Ovary (tissue), 10 donors: ENCODE measurements at regions of chr22 and their contacts with region 1.

Region 1: DNA sequence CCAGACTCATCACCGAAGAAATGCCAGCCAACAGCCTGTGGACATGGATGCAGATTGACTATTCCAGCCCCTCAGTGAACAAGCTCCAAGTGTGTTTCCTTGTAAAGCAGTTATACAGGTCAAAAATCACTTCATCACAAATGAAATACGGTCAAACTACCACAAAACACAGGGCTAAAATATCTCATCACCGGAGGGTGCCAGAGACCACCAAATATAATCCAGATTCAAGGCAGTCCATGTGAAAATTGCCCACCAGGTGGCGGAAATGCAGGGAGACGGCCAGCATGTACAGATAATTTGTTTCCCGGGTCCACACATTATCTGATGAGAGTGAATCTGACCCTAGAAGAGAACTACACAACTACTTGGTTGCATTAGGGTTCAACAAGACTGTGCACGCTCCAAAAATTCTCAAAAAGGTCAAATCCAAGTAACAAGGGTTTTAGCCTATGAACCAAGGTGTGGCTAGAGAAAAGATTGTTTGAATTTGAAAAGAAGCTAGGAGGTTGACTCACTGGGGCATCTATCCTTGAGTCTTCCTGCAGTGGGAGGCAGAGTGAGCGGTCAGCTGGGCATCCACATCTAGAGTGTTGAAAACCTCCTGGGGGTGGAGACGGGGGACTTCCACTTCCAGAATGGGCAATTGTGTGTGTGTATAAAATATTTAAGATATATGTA is 71.7 kb downstream of the IGLL5 start:
- DNase-seq: peak; percentile 73 to 85 (median 82)
- H3K4me3 ChIP-seq: no peak overlapping the region
- H3K27ac ChIP-seq: no peak overlapping the region
- H3K4me1 ChIP-seq: no peaks in the 10 kb centered on the region
- H3K27me3 ChIP-seq: no peaks in the 10 kb centered on the region
- CTCF ChIP-seq: peak; percentile 90 to 98 (median 96)
- EP300 ChIP-seq: no peak
- POLR2A ChIP-seq: no peak

Region 2: DNA sequence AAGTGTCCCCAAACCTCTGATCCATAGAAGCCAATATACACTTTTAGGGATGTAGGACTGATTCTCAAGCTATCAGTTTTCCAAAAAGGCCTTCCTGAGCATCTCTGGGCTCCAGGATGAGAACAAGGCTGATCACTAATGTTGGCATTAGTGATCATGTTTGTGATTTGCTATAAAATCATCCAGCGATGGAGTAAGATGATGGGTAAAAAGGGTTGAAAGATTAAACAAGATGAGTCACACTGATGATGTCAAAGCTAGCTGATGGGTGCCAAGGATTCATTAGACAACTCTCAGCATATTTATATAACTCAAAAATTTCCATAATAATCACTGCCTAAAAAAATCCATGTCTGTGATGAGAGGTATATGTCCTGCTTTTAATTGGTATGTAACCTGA is 493.5 kb before region 1 on chr22:
- intact Hi-C with region 1: loop called in 2 of 4 experiments (anchors 5 kb)
- DNase-seq: no peak
- H3K4me3 ChIP-seq: no peak overlapping the region
- H3K27ac ChIP-seq: no peak overlapping the region
- H3K4me1 ChIP-seq: no peaks in the 10 kb centered on the region
- H3K27me3 ChIP-seq: no peaks in the 10 kb centered on the region
- CTCF ChIP-seq: no peak
- EP300 ChIP-seq: no peak
- POLR2A ChIP-seq: no peak

Region 3: DNA sequence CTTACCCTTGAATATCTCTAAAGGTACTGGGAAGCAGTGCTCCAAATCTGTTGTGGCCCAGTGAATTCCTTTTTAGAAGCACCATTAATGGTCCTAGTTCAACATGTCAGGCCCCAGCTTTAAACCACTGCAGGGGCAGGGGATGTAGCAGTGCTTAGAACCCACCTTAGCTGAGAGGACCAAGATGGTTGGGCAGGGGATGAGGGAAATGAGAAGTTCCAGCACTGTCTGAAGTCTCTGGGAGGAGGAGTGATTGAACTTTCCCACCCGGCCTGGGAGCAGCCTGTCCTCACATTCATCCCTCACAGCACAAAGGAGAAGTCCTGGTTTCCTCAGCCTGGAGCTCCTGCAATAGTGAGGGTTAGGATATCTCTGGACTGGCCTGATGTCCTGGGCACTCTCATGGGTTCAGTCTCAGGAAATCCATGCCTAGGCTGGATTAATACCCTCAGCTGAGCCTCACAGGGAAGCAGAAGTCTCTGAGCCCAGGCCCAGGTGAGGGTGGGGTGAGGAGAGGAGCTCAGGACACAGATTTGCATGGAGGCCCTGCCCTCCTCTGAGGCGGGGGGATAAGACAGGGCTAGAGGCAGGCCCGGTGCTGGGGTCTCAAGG is 371.6 kb before region 1 on chr22:
- intact Hi-C with region 1: loop called in 1 of 4 experiments (anchors 10 kb)
- DNase-seq: no peak
- H3K4me3 ChIP-seq: no peak overlapping the region
- H3K27ac ChIP-seq: no peak overlapping the region
- H3K4me1 ChIP-seq: no peaks in the 10 kb centered on the region
- H3K27me3 ChIP-seq: no peaks in the 10 kb centered on the region
- CTCF ChIP-seq: no peak
- EP300 ChIP-seq: no peak
- POLR2A ChIP-seq: no peak

Region 4: DNA sequence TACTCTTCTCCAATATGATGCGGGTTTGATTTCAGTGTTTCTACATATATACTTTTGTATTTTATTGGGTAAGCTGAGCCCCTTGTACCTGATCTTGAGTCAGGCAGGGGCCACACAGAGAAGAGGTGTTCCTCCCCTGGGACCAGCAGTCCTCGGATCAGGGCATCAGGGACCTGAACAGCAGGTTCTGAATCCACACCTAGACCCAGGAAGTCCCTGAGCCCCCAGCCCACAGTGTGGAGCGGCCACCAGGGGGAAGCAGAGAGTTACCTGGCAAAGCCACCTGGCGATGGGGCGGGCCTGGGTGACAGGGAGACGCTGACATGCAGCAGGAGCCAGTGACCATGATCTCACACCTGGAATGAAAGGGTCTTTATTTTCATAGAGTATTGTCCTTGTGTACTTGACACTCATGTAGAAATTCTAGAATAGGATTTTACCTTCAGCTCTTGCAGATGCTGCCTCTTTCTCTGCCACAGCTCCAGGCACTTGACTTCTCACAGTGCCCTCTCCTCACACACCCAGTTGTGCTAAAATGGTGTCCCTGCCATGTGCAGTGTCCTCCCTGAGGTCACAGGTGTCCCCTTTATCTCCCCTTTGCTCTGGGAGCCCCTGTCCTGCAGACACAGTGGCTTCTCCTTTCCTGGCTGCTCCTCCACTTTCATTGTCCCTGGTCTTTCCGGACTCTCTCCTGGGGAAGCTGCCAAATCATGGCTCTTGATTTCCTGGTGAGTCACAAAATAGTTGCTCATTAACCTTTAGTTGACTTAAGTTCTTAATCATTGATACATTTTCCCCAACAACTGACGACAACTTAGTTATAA is 266.4 kb before region 1 on chr22:
- intact Hi-C with region 1: loop called in 1 of 4 experiments (anchors 10 kb)
- DNase-seq: peak; percentile 29 to 65 (median 52)
- H3K4me3 ChIP-seq: no peak overlapping the region
- H3K27ac ChIP-seq: no peak overlapping the region
- H3K4me1 ChIP-seq: no peaks in the 10 kb centered on the region
- H3K27me3 ChIP-seq: no peaks in the 10 kb centered on the region
- CTCF ChIP-seq: peak in 1 of 3 donors; percentile 26
- EP300 ChIP-seq: no peak
- POLR2A ChIP-seq: no peak

Region 5: GRCh38 chr22:23012081-23012622 is 52.9 kb after region 1 on chr22:
- intact Hi-C with region 1: no loop called
- DNase-seq: no peak
- H3K4me3 ChIP-seq: no peak overlapping the region
- H3K27ac ChIP-seq: no peak overlapping the region
- H3K4me1 ChIP-seq: no peaks in the 10 kb centered on the region
- H3K27me3 ChIP-seq: no peaks in the 10 kb centered on the region
- CTCF ChIP-seq: no peak
- EP300 ChIP-seq: no peak
- POLR2A ChIP-seq: no peak

Region 6: DNA sequence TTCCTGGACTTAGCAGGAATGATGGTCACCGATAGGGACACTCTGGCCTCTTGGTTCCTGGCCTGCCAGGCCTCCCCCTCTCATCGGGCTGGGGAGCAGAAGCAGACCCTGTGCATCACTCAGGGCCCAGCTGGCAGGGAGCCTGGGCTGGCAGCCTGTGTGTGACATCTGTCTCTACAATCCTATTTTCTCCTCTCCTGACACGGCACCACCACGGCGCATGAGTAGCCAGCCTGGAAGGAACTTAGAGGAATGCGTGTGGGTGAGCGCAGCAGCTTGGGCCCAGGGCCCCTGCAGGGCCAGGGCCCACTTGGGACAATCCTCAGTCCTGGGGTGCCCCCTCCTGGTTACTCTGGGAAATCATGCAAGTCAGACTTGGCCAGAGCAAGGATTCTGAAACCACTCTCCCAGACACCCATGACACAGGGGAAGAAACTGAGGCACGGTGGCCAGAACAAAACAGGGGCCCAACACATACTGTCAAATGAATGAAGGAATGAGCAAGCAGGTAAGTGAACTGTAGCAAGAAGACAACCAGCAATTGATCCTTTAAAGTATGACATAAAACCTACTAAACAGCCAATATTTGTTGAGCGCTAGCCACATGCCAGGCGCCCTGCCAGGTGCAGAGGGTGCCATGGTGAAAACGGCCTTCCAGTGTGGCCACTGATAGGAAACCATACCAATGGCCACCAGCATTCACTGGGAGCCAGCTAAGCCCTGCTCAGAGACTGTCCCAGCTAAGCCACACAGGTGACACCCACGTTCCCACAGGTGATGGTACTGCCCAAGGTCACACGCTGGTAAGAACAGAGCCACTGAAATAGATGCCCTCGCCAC is 169.2 kb after region 1 on chr22:
- intact Hi-C with region 1: loop called (anchors 1 to 5 kb)
- DNase-seq: peak; percentile 74 to 91 (median 87)
- H3K4me3 ChIP-seq: no peak overlapping the region
- H3K27ac ChIP-seq: no peak overlapping the region
- H3K4me1 ChIP-seq: peaks cover 8% of the 10 kb centered on the region
- H3K27me3 ChIP-seq: no peaks in the 10 kb centered on the region
- CTCF ChIP-seq: peak; percentile 53 to 89 (median 87)
- EP300 ChIP-seq: no peak
- POLR2A ChIP-seq: no peak

Region 7: GRCh38 chr22:23144932-23145873 is 185.9 kb after region 1 on chr22 and contains the start of gene RAB36:
- intact Hi-C with region 1: no loop called
- DNase-seq: peak; percentile 99 to 100 (median 100)
- H3K4me3 ChIP-seq: peak within 1 kb of the TSS; percentile 47
- H3K27ac ChIP-seq: peak within 1 kb of the TSS in 1 of 2 donors; percentile 77
- H3K4me1 ChIP-seq: peaks cover 4% of the 10 kb centered on the region
- H3K27me3 ChIP-seq: no peaks in the 10 kb centered on the region
- CTCF ChIP-seq: no peak
- EP300 ChIP-seq: no peak
- POLR2A ChIP-seq: no peak
- total RNA-seq, gene RAB36: 3.9 to 18.7 (median 9.0) TPM

Region 8: DNA sequence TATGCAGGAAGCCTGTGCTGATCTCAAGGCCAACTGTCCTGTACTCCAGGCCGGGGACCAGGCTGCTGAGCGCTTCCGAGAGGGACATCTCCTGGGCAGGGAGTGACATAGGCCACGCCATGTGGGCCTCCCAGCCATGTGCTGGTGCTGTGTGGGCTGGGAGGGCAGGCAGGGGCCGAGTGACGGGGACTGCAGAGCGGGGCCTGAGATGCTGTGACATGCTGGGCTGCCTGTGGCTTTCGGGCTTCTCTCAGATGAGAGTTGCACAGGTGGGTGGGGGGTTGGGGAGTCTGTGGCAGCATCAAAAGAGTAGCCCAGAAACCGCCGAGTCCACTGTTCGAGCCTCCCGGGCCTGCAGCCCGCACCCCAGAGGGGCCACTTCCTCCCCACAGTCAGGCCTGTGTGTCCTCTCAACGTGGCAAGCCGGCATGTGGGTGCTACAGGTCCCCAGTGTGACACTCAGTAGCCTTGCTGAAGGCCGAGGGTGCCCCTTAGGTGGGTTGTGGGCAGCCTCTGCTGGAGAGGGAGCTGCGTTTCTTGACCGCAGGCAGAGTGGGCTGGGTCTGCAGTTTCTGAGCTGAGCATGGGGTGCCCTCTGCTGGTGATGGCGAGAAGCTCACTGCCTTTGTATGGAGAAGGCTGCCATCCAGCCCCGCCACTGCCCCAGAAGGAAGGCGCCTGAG is 322.3 kb after region 1 on chr22:
- intact Hi-C with region 1: loop called in 2 of 4 experiments (anchors 10 kb)
- DNase-seq: peak; percentile 83 to 91 (median 89)
- H3K4me3 ChIP-seq: no peak overlapping the region
- H3K27ac ChIP-seq: no peak overlapping the region
- H3K4me1 ChIP-seq: peaks cover 1% of the 10 kb centered on the region
- H3K27me3 ChIP-seq: no peaks in the 10 kb centered on the region
- CTCF ChIP-seq: peak; percentile 79 to 94 (median 93)
- EP300 ChIP-seq: no peak
- POLR2A ChIP-seq: no peak